ENCODE measurements at regions of chrX and their contacts with region 1.

Region 1: GRCh38 chrX:109856974-109857373 is 123.9 kb upstream of the ACSL4 start:
- DNase-seq: peak; percentile 35
- H3K4me3 ChIP-seq: no peak overlapping the region
- H3K27ac ChIP-seq: no peak overlapping the region
- H3K4me1 ChIP-seq: no peaks in the 10 kb centered on the region
- CTCF ChIP-seq: peak; percentile 88

Region 2: GRCh38 chrX:109709129-109709631 is 147.8 kb before region 1 on chrX:
- CTCF ChIA-PET with region 1: interaction called, 3 read pairs
- POLR2A ChIA-PET with region 1: interaction called, 3 read pairs
- intact Hi-C with region 1: loop called (anchors 2 kb)
- DNase-seq: peak; percentile 38
- H3K4me3 ChIP-seq: peak overlapping the region; percentile 9
- H3K27ac ChIP-seq: peak overlapping the region; percentile 55
- H3K4me1 ChIP-seq: peaks cover 38% of the 10 kb centered on the region
- CTCF ChIP-seq: no peak

Region 3: DNA sequence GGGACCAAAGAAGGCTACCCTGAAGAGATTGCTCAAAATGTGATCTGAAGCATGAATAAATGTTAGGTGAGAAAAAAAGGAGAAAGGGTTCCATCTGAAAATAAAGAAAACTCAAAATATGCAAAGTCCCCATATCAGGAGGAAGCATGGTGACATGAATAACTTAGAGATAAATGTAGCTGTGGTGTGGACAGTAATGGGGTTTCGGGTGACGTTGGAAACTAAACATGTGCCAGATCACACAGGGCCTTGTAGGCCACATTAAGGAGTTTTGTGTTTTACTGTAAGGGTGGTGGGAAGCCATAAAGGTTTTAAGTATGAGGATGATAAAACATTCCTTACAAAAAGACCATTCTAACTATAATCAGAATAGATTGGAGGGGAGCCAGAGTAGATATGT is 83.6 kb before region 1 on chrX:
- CTCF ChIA-PET with region 1: no interaction called
- POLR2A ChIA-PET with region 1: no interaction called
- intact Hi-C with region 1: no loop called
- DNase-seq: no peak
- H3K4me3 ChIP-seq: no peak overlapping the region
- H3K27ac ChIP-seq: no peak overlapping the region
- H3K4me1 ChIP-seq: no peaks in the 10 kb centered on the region
- CTCF ChIP-seq: no peak